Activated CD4-positive, alpha-beta T cell treated with anti-CD3 and anti-CD28 coated beads for 36 hours (primary cell): ENCODE measurements at regions of chr7 and their contacts with region 1.

Region 1: GRCh38 chr7:43906331-43907010 is at the start of gene URGCP:
- DNase-seq: peak; percentile 73
- ATAC-seq: peak; percentile 81
- H3K4me3 Mint-ChIP-seq: peak within 1 kb of the TSS; percentile 89
- H3K27ac Mint-ChIP-seq: peak within 1 kb of the TSS; percentile 96
- H3K4me1 Mint-ChIP-seq: peaks cover 33% of the 10 kb centered on the region
- H3K27me3 Mint-ChIP-seq: no peaks in the 10 kb centered on the region
- total RNA-seq, gene URGCP: 22.2 to 23.0 TPM

Region 2: DNA sequence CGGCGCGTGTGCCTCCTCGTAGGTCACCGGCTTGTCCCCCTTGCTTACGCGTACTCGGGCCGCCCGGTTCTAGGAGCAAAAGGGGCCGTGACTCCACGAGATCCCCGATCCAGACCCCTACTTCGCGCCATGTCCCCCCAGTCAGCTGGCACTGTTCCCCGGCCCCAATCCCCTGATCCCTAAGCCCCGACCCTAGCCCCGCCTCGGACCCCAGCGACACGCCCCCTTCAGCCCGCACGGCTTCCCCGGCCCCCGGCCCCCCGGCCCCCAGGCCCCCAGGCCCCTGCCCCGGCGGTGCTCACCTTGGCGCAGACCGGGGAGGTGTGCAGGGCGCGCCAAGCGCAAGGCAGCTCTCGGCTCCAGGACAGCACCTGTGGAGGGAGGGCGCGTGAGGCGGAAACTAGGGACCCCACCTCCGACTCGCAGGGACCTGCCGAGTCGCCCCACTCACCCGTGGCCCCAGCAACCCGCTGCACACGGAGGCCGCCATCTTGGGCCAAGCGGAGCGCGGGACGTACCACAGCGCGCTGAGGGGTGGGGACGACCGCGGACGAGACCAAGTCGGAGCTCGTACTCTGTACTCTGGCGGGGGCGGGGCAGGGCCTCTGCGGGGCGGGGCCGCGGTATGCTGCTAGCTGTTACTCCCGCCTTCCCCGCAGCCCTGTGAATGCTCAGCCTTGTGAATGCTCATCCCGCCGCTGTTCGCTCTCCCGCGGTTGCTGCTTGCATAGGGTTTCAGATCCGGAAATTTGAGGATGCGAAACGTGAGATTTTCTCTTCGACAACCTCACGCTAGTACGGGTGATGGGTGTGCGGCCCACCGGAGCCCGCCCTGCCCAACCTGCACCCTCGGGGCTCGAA is 37.2 kb before region 1 on chr7 and contains the start of gene MRPS24:
- CTCF ChIA-PET with region 1: interaction called, 4 read pairs
- POLR2A ChIA-PET with region 1: interaction called, 3 read pairs
- intact Hi-C with region 1: loop called (anchors 1 to 5 kb)
- DNase-seq: peak; percentile 98
- ATAC-seq: peak; percentile 96
- H3K4me3 Mint-ChIP-seq: peak within 1 kb of the TSS; percentile 83
- H3K27ac Mint-ChIP-seq: peak within 1 kb of the TSS; percentile 84
- H3K4me1 Mint-ChIP-seq: peaks cover 35% of the 10 kb centered on the region
- H3K27me3 Mint-ChIP-seq: no peaks in the 10 kb centered on the region
- total RNA-seq, gene MRPS24: 121 to 149 TPM